RWPE1 (cell line): ENCODE measurements at regions of chr11 and their contacts with region 1.

Region 1: DNA sequence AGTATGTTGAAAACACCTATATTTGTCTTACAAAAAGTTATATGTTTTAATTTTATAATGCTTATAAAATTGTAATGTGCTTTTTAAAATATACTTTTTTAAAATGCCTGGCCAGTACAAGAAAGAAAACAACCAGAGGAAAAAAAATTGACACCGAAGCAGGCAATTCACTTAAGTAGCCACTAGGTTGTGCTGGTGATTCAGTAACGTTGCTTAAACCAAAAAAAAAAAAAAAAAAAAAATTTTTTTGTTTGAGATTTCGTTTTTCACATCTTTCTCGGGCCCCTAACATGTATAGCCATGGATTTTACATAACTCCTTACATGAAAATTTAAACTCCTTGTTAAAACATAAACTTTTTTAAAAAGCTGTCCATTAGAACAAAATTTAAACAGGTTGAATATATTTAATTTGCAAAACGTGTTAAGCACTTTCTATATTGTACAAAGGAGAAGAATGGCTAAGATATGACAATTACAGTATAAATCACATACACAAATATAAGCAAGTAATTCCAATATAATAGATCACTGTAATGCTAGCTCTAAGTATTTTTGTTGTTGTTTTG is 9.2 kb downstream of the OR8B4 start:
- DNase-seq: peak; percentile 23
- H3K27ac ChIP-seq: no peak overlapping the region
- CTCF ChIP-seq: peak; percentile 67

Region 2: GRCh38 chr11:124612567-124613246 is 197.3 kb after region 1 on chr11:
- CTCF ChIA-PET with region 1: interaction called, 10 read pairs
- POLR2A ChIA-PET with region 1: no interaction called
- DNase-seq: no peak
- H3K27ac ChIP-seq: no peak overlapping the region
- CTCF ChIP-seq: no peak